Stomach (tissue), 19 donors: ENCODE measurements at regions of chr5 and their contacts with region 1.

Region 1: DNA sequence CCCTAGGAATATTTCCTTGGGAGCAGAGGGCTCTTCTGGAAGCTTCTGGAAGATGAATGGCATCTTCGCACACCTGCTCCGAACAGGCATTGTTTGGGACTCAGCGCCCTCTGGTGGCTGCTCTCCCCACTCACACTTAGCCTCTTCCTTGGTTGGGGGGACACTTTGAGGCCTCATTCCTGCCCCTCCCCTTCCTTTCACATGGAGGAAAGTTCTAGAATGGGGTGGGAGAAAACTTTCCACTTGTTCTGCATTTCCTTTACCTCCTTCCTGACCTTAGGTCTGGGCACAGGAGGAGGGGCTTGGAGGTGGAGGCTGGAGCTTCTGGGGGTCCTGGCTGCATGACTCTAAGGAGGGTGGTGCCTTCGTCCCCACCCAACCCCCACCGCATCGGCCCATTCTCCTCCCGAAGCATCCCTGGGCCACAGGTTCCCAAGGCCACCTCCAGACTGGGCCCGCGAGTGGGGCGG is 19.3 kb upstream of the SMIM32 start:
- DNase-seq: peak; percentile 64 to 81
- H3K4me3 ChIP-seq: no peak overlapping the region
- H3K27ac ChIP-seq: no peak overlapping the region
- H3K4me1 ChIP-seq: no peaks in the 10 kb centered on the region
- H3K27me3 ChIP-seq: peaks cover 0 to 24% (median 5%) of the 10 kb centered on the region in 3 donors
- CTCF ChIP-seq: peak in 5 of 7 experiments; percentile 75 to 93 (median 79)
- EP300 ChIP-seq: no peak
- POLR2A ChIP-seq: no peak

Region 2: GRCh38 chr5:135887351-135887864 is 324.9 kb before region 1 on chr5:
- intact Hi-C with region 1: loop called (anchors 2 kb)
- DNase-seq: peak; percentile 57 to 89
- H3K4me3 ChIP-seq: no peak overlapping the region
- H3K27ac ChIP-seq: no peak overlapping the region
- H3K4me1 ChIP-seq: peaks cover 3 to 20% (median 8%) of the 10 kb centered on the region in 4 donors
- H3K27me3 ChIP-seq: peaks cover 0 to 4% (median 3%) of the 10 kb centered on the region in 3 donors
- CTCF ChIP-seq: peak in 5 of 7 experiments; percentile 40 to 81 (median 63)
- EP300 ChIP-seq: no peak
- POLR2A ChIP-seq: no peak

Region 3: GRCh38 chr5:135944967-135945560 is 267.2 kb before region 1 on chr5:
- intact Hi-C with region 1: loop called (anchors 10 kb)
- DNase-seq: peak in 1 of 2 donors; percentile 91
- H3K4me3 ChIP-seq: no peak overlapping the region
- H3K27ac ChIP-seq: no peak overlapping the region
- H3K4me1 ChIP-seq: no peaks in the 10 kb centered on the region
- H3K27me3 ChIP-seq: peaks cover 0 to 4% (median 0%) of the 10 kb centered on the region in 3 donors
- CTCF ChIP-seq: peak in 5 of 7 experiments; percentile 53 to 81 (median 64)
- EP300 ChIP-seq: no peak
- POLR2A ChIP-seq: no peak